ENCODE measurements at regions of chr16 and their contacts with region 1.

Region 1: DNA sequence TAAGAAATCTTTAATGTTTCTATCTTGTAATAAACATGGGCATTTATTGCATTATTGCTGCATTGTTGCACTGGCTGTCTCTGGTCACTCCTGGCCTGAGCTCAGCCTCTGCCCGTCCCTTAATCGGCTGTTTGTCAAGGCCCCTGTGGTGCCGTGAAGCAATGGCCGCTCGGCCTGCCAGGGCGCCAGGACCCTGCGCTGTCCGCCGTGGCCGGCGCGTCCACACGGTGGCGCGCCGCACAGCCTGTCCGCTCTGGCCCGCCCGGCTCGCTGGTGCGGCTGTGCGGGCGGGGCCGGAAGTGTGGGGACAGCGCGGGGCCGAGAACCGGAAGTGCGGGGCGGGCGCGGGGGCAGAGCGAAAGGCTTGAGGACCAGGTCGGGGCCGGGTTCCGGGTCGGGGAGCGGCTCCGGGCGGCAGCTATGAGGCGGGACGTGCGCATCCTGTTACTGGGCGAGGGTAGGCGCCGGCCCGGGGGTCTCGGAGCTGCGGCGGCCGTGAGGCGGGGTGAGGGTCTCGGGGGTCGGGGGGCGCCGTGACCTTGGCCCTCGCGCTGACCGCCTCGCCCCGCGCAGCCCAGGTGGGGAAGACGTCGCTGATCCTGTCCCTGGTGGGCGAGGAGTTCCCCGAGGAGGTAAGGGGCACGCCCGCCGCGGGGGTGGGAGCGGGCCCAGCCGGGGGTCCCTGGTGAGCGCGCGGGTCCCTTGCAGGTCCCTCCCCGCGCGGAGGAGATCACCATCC is at the start of gene RHOT2:
- DNase-seq: peak; percentile 96
- ATAC-seq: peak; percentile 98
- H3K4me3 Mint-ChIP-seq: peak within 1 kb of the TSS; percentile 76
- H3K27ac Mint-ChIP-seq: peak within 1 kb of the TSS; percentile 85
- H3K4me1 Mint-ChIP-seq: peaks cover 6% of the 10 kb centered on the region
- H3K27me3 Mint-ChIP-seq: no peaks in the 10 kb centered on the region
- total RNA-seq, gene RHOT2: 123 to 130 TPM

Region 2: DNA sequence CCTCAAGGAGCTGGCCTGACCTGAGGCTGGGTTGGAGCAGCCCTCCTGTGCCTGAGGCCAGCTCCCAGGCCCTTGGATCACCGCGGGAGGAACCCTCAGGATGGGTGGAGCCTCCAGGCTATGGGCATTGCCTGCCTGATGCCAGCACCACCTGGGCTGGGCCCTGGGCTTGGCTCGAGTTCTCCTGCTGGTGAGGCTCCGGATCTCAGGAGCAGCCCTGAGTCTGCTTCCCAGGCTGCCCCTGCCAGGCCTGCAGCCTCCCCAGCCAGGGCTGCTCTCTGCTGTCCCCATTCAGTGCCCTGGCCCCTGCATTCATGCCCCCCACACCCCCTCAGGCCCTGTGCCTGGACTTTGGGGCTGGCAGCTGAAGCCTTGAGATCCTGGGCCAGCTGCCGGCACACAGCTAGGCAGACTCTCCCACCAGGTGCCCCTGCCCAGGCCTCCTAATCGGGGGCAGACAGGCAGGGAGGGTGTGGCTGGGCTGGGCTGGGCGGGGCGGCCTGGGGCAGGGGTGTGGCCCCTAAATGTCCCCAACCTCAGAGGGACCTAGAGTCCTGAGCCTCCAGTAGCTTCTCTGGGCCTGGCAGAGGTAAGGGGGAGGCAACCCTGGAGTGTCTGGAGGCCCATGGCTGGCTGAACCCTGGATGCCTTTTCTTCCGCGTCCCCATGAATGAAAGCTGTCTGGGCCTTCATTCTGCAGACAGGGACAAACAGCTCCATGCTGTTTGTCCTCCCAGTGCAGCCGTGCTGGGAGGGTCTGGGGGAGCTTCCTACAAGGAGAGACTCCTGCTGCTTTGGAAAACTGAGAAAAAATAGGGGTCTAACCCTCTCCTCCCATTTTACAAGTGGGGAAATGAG is 99.3 kb before region 1 on chr16:
- CTCF ChIA-PET with region 1: no interaction called
- POLR2A ChIA-PET with region 1: no interaction called
- intact Hi-C with region 1: no loop called
- DNase-seq: no peak
- ATAC-seq: no peak
- H3K4me3 Mint-ChIP-seq: peak overlapping the region; percentile 78
- H3K27ac Mint-ChIP-seq: peak overlapping the region; percentile 92
- H3K4me1 Mint-ChIP-seq: peaks cover 26% of the 10 kb centered on the region
- H3K27me3 Mint-ChIP-seq: no peaks in the 10 kb centered on the region

Region 3: GRCh38 chr16:578870-579405 is 89.0 kb before region 1 on chr16:
- CTCF ChIA-PET with region 1: no interaction called
- POLR2A ChIA-PET with region 1: no interaction called
- intact Hi-C with region 1: loop called in 1 of 2 experiments (anchors 2 kb)
- DNase-seq: peak; percentile 85
- ATAC-seq: peak; percentile 94
- H3K4me3 Mint-ChIP-seq: no peak overlapping the region
- H3K27ac Mint-ChIP-seq: no peak overlapping the region
- H3K4me1 Mint-ChIP-seq: no peaks in the 10 kb centered on the region
- H3K27me3 Mint-ChIP-seq: no peaks in the 10 kb centered on the region

Region 4: DNA sequence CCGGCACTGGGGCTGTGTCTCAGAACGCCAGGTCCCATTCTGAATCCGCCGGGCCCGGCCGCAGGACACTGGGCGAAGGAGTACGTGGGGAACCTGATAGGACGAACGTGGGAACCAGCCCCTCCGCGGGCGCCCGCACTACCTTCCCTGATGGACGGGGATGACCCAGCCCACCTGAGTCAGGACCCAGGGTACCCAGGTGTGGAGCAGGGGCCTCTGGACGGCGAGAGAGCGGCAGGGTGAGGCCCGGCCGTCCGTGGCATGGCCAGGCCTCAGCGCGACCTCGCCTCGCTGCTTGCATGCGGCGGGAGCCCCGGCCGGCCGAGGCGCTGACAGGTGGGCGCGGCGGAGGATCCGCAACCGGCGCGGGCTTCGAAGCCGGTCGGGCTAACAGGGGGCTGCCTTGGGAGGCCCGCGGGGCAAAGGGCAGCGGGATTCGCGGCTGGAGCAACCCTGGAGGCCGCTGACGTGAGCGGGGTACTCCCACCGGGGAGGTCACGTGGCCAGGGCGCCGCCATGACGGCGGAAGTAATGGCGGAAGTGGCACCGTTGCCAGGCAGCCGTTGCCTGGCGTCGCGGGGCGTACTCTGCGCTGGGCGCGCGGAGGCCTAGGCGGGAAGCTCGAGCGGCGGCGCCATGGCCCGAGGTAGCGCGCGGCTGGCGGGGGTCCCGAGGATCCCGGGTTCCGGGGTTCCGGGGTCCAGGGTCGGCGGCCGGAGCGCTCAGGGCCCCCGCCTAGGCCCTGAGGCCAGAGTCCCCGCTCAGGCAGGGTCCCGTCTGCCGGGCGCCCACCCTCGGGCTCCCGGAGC is 19.0 kb before region 1 on chr16 and contains the start of gene WDR90:
- CTCF ChIA-PET with region 1: interaction called, 5 read pairs
- POLR2A ChIA-PET with region 1: no interaction called
- intact Hi-C with region 1: loop called in 1 of 2 experiments (anchors 1 kb)
- DNase-seq: peak; percentile 96
- ATAC-seq: peak; percentile 92
- H3K4me3 Mint-ChIP-seq: peak within 1 kb of the TSS; percentile 81
- H3K27ac Mint-ChIP-seq: peak within 1 kb of the TSS; percentile 73
- H3K4me1 Mint-ChIP-seq: peaks cover 15% of the 10 kb centered on the region
- H3K27me3 Mint-ChIP-seq: no peaks in the 10 kb centered on the region
- total RNA-seq, gene WDR90: 43.6 to 55.9 TPM

Region 5: GRCh38 chr16:1959269-1960049 is 1291.5 kb after region 1 on chr16 and contains the start of gene NDUFB10:
- CTCF ChIA-PET with region 1: no interaction called
- POLR2A ChIA-PET with region 1: no interaction called
- intact Hi-C with region 1: loop called in 1 of 2 experiments (anchors 1 kb)
- DNase-seq: peak; percentile 96
- ATAC-seq: peak; percentile 77
- H3K4me3 Mint-ChIP-seq: peak within 1 kb of the TSS; percentile 96
- H3K27ac Mint-ChIP-seq: peak within 1 kb of the TSS; percentile 95
- H3K4me1 Mint-ChIP-seq: peaks cover 34% of the 10 kb centered on the region
- H3K27me3 Mint-ChIP-seq: no peaks in the 10 kb centered on the region
- total RNA-seq, gene NDUFB10: 113 to 118 TPM

Measured in activated CD4-positive, alpha-beta T cell treated with anti-CD3 and anti-CD28 coated beads for 36 hours (primary cell).